ENCODE measurements at regions of chr5 and their contacts with region 1.

Region 1: DNA sequence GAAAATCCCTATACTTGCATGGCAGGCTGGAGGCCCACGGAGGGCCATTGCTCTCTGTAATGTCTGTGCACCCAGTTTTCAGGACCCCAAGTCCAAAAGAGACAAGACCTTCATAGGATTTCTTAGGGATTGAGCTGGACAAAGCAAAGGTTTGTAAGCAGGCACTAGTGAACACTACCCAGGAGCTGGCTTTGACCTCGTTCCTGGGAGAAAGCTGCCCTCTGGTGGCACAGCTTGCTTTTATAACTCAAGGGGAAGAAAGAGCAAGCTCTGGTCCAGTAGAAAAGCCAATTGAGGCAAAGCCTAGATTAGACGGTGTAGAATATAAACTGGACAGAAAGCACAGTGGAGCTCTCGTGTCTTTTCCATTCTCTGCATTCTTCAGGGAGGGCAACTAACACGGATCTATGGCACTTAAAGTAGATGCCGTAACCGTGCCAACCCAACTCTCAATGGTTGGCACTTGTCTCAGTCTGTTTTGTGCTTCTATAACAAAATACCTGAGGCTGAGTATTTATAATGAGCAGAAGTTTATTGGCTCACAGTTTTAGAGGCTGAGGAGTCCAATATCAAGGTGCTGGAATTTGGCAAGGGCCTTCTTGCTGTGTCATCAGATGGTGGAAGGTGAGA is 7.9 kb downstream of the GABRP start:
- DNase-seq: no peak
- ATAC-seq: peak; percentile 86
- H3K4me3 ChIP-seq: no peak overlapping the region
- H3K27ac ChIP-seq: no peak overlapping the region
- H3K4me1 ChIP-seq: no peaks in the 10 kb centered on the region
- H3K27me3 ChIP-seq: no peaks in the 10 kb centered on the region
- CTCF ChIP-seq: peak; percentile 61

Region 2: DNA sequence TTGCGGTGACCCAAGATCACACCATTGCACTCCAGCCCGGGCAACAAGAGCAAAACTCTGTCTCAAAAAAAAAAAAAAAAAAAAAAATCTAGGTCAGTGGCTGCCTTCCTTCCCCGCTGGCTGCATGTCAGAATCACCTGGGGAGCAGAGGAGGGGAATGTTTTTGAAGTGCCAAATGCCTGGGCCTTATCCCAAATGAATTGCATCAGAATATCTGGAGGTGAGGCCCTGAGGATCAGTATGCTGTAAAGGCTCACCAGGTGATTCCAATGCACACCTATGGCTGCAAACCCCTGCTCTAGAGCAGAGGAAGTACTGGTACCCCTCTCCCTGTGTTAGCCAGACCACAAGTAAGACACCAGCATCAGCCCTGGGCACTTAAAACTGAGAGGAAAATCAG is 52.6 kb before region 1 on chr5:
- intact Hi-C with region 1: loop called (anchors 5 kb)
- DNase-seq: no peak
- ATAC-seq: peak; percentile 64
- H3K4me3 ChIP-seq: no peak overlapping the region
- H3K27ac ChIP-seq: no peak overlapping the region
- H3K4me1 ChIP-seq: no peaks in the 10 kb centered on the region
- H3K27me3 ChIP-seq: peaks cover under 1% of the 10 kb centered on the region
- CTCF ChIP-seq: no peak

Region 3: GRCh38 chr5:170747851-170748250 is 43.6 kb before region 1 on chr5:
- intact Hi-C with region 1: loop called (anchors 5 kb)
- DNase-seq: no peak
- ATAC-seq: no peak
- H3K4me3 ChIP-seq: no peak overlapping the region
- H3K27ac ChIP-seq: no peak overlapping the region
- H3K4me1 ChIP-seq: peaks cover 23% of the 10 kb centered on the region
- H3K27me3 ChIP-seq: peaks cover 11% of the 10 kb centered on the region
- CTCF ChIP-seq: peak; percentile 30

Region 4: DNA sequence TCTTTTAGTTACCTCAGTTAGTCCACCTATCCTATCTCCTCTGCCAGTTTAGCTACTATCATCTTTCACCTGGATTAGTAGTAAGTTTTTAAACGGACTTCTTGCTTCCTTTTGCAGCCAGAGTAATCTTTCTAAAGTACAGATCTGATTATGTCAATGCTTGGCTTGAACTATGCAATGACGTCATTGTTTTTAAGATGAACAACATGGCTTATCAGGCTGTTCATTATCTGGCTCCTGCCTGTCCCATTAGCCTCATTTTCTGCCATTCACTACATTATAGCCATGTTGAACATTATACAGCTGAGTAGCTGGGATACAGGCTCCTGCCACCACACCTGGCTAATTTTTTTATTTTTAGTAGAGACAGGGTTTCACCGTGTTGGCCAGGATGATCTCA is 169.1 kb after region 1 on chr5:
- intact Hi-C with region 1: no loop called
- DNase-seq: no peak
- ATAC-seq: no peak
- H3K4me3 ChIP-seq: no peak overlapping the region
- H3K27ac ChIP-seq: no peak overlapping the region
- H3K4me1 ChIP-seq: no peaks in the 10 kb centered on the region
- H3K27me3 ChIP-seq: no peaks in the 10 kb centered on the region
- CTCF ChIP-seq: no peak